Activated CD8-positive, alpha-beta T cell treated with anti-CD3 and anti-CD28 coated beads for 36 hours (primary cell): ENCODE measurements at regions of chr11 and their contacts with region 1.

Region 1: GRCh38 chr11:16820324-16821092 is 82.1 kb downstream of the C11orf58 start:
- DNase-seq: peak; percentile 91
- ATAC-seq: peak; percentile 90
- H3K4me3 Mint-ChIP-seq: no peak overlapping the region
- H3K27ac Mint-ChIP-seq: no peak overlapping the region
- H3K4me1 Mint-ChIP-seq: peaks cover 4% of the 10 kb centered on the region
- H3K27me3 Mint-ChIP-seq: peaks cover 3% of the 10 kb centered on the region
- CTCF ChIP-seq: peak; percentile 83

Region 2: DNA sequence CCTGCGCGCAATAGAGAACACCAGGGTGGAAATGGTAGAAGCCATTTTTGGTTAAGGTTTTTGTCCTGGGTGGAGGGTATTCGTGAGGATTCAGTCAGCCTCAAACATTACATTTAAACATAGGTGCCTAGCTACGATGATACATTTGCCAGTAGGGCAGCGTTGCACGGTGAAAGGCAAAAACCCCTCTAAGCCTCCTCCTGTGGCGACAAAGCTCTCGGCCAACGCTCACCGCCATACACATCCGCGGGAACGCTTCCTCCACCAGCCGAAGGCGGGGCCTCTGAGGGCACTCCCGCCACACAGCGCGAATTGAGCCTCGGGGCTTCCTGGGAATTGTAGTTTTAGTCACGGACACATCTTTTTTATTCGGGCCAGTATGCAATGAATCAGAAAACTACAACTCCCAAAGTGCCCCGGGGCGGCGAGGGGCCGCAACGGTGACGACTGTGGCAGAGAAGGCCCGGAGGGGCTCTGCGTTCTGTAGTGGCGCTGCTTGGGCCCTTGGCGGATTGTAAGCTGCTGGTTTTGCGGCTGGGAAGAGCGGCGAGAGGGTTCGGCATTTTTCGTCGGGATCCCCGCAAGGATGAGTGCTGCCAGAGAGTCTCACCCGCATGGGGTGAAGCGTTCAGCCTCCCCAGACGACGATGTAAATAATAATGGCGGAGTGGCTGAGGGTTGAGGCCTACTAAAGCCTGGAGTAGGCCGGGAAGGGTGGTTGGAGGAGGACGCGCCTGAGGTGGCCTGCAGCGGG is 82.1 kb before region 1 on chr11 and contains the start of gene C11orf58:
- CTCF ChIA-PET with region 1: no interaction called
- POLR2A ChIA-PET with region 1: no interaction called
- intact Hi-C with region 1: no loop called
- DNase-seq: peak; percentile 98
- ATAC-seq: peak; percentile 97
- H3K4me3 Mint-ChIP-seq: no peak within 1 kb of the TSS
- H3K27ac Mint-ChIP-seq: peak within 1 kb of the TSS; percentile 89
- H3K4me1 Mint-ChIP-seq: peaks cover 28% of the 10 kb centered on the region
- H3K27me3 Mint-ChIP-seq: no peaks in the 10 kb centered on the region
- CTCF ChIP-seq: no peak
- total RNA-seq, gene C11orf58: 114 to 133 TPM

Region 3: GRCh38 chr11:16796311-16796710 is 24.2 kb before region 1 on chr11:
- CTCF ChIA-PET with region 1: interaction called, 14 read pairs
- POLR2A ChIA-PET with region 1: interaction called, 3 read pairs
- intact Hi-C with region 1: no loop called
- DNase-seq: no peak
- ATAC-seq: no peak
- H3K4me3 Mint-ChIP-seq: no peak overlapping the region
- H3K27ac Mint-ChIP-seq: no peak overlapping the region
- H3K4me1 Mint-ChIP-seq: peaks cover 27% of the 10 kb centered on the region
- H3K27me3 Mint-ChIP-seq: no peaks in the 10 kb centered on the region
- CTCF ChIP-seq: no peak

Region 4: GRCh38 chr11:16809886-16810668 is 10.4 kb before region 1 on chr11:
- CTCF ChIA-PET with region 1: interaction called, 34 read pairs
- POLR2A ChIA-PET with region 1: no interaction called
- intact Hi-C with region 1: no loop called
- DNase-seq: no peak
- ATAC-seq: no peak
- H3K4me3 Mint-ChIP-seq: no peak overlapping the region
- H3K27ac Mint-ChIP-seq: no peak overlapping the region
- H3K4me1 Mint-ChIP-seq: no peaks in the 10 kb centered on the region
- H3K27me3 Mint-ChIP-seq: no peaks in the 10 kb centered on the region
- CTCF ChIP-seq: no peak

Region 5: GRCh38 chr11:16856022-16856471 is 35.5 kb after region 1 on chr11:
- CTCF ChIA-PET with region 1: interaction called, 10 read pairs
- POLR2A ChIA-PET with region 1: no interaction called
- intact Hi-C with region 1: no loop called
- DNase-seq: no peak
- ATAC-seq: no peak
- H3K4me3 Mint-ChIP-seq: no peak overlapping the region
- H3K27ac Mint-ChIP-seq: no peak overlapping the region
- H3K4me1 Mint-ChIP-seq: no peaks in the 10 kb centered on the region
- H3K27me3 Mint-ChIP-seq: peaks cover 9% of the 10 kb centered on the region
- CTCF ChIP-seq: no peak

Region 6: DNA sequence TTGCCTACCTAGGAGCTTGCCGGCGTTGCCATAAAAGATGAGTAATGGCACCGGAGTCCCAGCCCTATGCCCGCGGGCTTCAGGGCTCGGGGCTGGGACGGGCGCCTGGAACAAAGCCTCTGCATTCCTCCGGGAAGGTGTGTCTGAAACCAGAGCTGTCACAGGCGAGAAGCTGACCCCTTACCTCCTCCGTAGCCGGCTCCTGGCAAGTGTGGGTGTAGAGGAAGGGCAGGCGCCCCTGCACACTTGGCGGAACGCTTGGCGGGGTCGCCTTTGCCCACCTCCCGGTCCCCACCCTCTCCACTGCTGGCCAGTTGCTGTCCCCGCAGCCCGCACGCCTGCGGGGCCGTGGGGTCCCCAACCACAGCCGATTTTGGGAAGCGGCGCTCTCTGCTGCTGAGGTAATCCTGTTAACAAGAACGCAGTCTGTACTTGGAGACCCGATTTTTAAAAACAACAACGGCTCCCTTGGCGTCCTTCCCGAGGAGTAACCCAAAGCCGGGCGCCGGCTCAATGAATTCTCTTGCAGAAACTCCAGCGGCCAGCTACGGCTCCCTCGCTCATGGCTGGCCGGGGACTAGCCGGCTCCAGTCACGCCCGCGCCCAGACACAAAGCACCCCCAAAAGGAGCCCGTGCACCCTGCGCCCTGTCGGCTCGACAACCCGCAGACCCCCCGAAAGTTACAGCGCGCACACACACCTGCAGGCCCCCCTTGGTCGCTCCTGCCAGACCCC is 104.5 kb after region 1 on chr11:
- CTCF ChIA-PET with region 1: interaction called, 21 read pairs
- POLR2A ChIA-PET with region 1: interaction called, 4 read pairs
- intact Hi-C with region 1: loop called (anchors 5 kb)
- DNase-seq: no peak
- ATAC-seq: peak; percentile 10
- H3K4me3 Mint-ChIP-seq: peak overlapping the region; percentile 71
- H3K27ac Mint-ChIP-seq: no peak overlapping the region
- H3K4me1 Mint-ChIP-seq: peaks cover 11% of the 10 kb centered on the region
- H3K27me3 Mint-ChIP-seq: peaks cover 47% of the 10 kb centered on the region
- CTCF ChIP-seq: no peak

Region 7: DNA sequence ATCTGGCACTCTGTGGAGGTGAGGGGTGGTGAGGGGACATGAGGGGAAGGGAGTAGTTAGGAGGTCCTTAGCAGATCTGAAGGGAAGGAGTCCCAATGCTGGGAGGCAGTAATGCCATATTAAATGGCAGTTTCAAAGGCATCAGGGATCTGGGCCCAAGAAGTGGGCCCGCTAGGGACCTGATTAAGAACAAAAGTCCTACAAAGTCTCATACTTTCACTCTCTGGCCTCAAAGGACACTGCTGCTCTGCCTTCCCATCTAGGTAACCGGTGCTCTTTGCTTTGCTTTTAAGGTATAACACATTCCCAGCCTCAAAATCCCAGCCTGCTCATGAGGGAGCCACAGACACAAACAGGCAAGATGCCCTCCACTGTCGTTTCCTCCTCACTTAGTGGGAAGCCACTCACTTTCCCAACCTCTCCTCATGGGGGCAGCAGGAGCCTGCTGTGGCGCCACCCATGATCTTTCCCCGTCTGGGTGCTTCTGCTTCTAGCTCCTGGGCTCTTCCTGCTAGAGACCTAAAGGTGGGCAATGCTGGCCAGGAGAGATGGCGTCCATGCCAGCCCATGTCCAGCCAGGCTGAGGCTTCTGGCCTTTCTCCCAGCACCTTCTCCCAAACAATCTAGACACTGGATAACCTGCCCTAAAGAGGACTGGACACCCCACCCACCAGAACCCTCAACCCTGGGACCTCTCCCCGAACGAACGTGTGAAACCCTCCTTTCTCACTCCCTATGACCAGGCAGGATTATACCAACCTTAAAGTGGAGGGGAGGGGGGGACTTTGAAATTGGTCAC is 125.4 kb after region 1 on chr11:
- CTCF ChIA-PET with region 1: interaction called, 10 read pairs
- POLR2A ChIA-PET with region 1: no interaction called
- intact Hi-C with region 1: loop called (anchors 5 kb)
- DNase-seq: peak; percentile 72
- ATAC-seq: peak; percentile 90
- H3K4me3 Mint-ChIP-seq: no peak overlapping the region
- H3K27ac Mint-ChIP-seq: no peak overlapping the region
- H3K4me1 Mint-ChIP-seq: peaks cover 6% of the 10 kb centered on the region
- H3K27me3 Mint-ChIP-seq: peaks cover 2% of the 10 kb centered on the region
- CTCF ChIP-seq: peak; percentile 60